Heart right ventricle (tissue), 16 donors: ENCODE measurements at regions of chr6 and their contacts with region 1.

Region 1: GRCh38 chr6:44456070-44456965 is 68.8 kb downstream of the CDC5L start:
- DNase-seq: peak in 1 of 2 donors; percentile 42
- ATAC-seq: peak; percentile 41 to 79 (median 72)
- H3K4me3 ChIP-seq: peak overlapping the region in 4 of 10 donors; percentile 8 to 21 (median 13)
- H3K27ac ChIP-seq: no peak overlapping the region
- H3K4me1 ChIP-seq: peaks cover 3 to 30% (median 20%) of the 10 kb centered on the region in 9 donors
- H3K27me3 ChIP-seq: no peaks in the 10 kb centered on the region
- CTCF ChIP-seq: peak; percentile 75 to 89 (median 81)

Region 2: DNA sequence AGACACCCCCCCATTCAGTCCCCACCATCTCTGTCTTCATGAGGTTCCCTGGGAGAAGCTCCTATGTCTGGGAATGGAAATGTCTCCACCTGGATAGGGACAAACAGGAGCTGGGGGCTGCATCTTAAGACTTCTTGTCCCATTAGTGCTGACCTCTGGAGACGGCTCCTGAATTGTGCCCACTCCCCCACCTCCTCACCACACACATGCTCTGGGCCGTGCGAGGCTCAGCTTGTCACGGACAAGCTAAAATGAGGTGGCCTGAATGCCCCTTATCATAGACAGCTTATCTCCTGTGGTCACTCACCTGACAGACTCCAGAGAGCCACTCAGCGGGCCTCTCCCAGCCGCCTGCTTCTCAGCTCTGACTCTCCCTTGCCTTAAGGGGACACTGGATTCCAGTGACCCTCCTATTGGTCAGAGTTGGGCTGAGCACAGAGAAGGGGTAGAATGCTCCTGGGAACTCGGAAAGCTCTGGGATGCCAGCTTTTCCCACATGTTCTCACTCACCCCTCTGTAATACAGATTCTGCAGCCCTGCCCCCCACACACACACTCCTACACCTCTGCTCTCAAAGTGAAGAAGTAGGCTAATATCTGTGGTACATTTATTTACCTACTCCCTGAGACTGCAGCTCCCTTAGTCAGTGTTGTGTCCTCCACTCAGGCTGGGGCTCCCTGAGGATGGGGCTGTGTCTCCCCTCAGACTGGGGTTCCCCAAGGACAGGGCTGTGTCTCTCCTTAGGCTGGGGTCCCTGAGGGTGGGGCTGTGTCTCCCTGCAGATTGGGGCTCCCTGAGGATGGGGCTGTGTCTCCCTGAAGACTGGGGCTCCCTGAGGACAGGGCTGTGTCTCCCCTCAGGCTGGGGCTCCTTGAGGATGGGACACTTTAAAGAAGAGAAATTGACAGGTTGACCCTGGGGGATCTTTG is 518.8 kb before region 1 on chr6:
- intact Hi-C with region 1: no loop called
- DNase-seq: no peak
- ATAC-seq: peak in 5 of 8 donors; percentile 7 to 56 (median 29)
- H3K4me3 ChIP-seq: no peak overlapping the region
- H3K27ac ChIP-seq: no peak overlapping the region
- H3K4me1 ChIP-seq: peaks cover 0 to 20% (median 6%) of the 10 kb centered on the region in 9 donors
- H3K27me3 ChIP-seq: no peaks in the 10 kb centered on the region
- CTCF ChIP-seq: no peak

Region 3: DNA sequence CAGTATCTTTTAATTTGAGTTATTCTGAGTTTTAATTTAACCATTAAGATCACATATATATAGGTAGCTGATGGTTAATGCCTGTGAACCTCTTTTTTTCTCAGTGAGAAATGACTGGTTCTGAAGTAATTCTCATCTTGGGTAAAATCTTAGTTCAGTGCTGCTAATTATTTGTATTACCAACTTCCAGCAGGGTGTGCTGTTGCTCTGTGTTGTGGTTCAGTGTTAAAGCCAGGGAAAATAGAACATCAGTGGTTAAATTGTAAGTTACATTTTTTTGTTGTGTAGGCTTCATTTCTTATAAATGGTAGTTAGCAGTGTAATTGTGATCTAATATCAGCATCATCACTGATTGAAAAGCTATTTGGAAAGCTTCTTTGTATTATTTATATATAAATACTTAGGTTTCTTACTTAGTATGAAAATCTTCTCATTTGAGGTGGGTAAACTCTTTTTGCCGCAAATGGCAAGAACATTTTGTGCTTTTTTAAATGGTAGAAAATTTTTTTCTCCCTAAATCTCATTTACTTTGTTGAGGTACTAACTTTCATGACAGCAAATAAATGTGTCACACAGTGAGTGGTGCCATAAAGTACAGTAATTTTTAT is 25.1 kb before region 1 on chr6:
- intact Hi-C with region 1: loop called in 3 of 10 experiments (anchors 1 to 2 kb)
- DNase-seq: peak in 1 of 2 donors; percentile 43
- ATAC-seq: peak in 7 of 8 donors; percentile 34 to 76 (median 72)
- H3K4me3 ChIP-seq: no peak overlapping the region
- H3K27ac ChIP-seq: peak overlapping the region in 1 of 10 donors; percentile 1
- H3K4me1 ChIP-seq: peaks cover 0 to 36% (median 22%) of the 10 kb centered on the region in 9 donors
- H3K27me3 ChIP-seq: no peaks in the 10 kb centered on the region
- CTCF ChIP-seq: peak; percentile 51 to 81 (median 77)

Region 4: GRCh38 chr6:44788387-44788981 is 332.2 kb after region 1 on chr6:
- intact Hi-C with region 1: no loop called
- DNase-seq: no peak
- ATAC-seq: no peak
- H3K4me3 ChIP-seq: no peak overlapping the region
- H3K27ac ChIP-seq: no peak overlapping the region
- H3K4me1 ChIP-seq: no peaks in the 10 kb centered on the region
- H3K27me3 ChIP-seq: peaks cover 0 to 11% (median 0%) of the 10 kb centered on the region in 7 donors
- CTCF ChIP-seq: no peak